ENCODE measurements at regions of chrX and their contacts with region 1.

Region 1: DNA sequence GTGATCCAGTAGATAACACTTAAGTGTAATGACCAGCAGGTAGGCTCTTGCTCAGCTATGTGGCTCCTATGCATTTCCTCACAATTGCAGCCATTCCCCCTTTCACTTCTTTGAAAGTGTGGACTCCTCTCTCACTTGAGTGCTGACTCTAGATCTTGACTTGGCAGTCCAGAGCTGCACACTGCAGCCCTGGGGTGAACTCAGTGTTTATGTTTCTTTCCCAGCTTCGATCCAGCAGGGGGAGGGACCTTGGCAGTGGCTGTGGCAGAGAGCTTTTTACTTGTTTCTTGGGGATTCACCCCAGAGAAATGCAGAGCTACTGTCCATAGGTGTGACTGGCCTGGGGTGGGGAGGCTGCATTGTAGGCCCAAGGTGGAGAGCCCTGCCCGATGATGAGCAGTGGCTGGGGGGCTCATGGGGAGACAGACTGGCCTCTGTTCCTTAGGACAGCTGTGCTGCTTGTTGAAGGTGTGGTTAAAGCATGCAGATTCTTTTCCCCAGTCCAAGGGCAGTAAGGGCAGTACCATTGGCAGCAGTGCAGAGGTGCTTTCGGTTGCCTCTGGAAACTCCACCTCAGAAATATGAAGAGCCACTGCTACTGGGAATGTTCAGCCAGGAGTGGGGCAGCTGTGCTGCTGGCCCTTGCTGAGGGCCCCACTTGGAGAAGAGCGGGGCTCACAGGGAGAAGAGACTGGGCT is 134.7 kb downstream of the SH3BGRL start:
- DNase-seq: peak; percentile 55
- H3K4me3 ChIP-seq: no peak overlapping the region
- H3K27ac ChIP-seq: peak overlapping the region; percentile 29 to 66 (median 56)
- H3K4me1 ChIP-seq: peaks cover 0 to 17% (median 7%) of the 10 kb centered on the region in 4 donors
- H3K27me3 ChIP-seq: no peaks in the 10 kb centered on the region
- CTCF ChIP-seq: no peak
- EP300 ChIP-seq: no peak
- POLR2A ChIP-seq: no peak

Region 2: DNA sequence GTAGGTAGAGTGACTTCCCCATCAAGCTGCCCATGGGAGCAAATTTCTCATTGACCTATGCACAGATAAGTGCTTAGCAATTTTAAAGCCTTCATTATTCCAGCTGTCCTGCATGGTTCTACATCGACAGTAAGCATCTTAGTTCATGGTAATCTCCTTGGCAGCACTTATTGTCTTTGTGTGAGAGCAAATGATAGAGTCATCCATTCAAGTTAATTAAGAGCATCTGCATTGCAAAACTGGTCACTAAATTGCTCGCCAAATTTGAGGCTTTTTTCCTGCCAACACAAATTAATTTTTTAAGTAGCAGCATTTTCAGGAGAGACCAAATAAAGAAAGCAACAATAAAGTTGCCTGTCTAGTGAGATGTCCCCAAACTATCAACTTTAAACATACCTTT is 58.0 kb before region 1 on chrX:
- intact Hi-C with region 1: loop called (anchors 10 kb)
- DNase-seq: no peak
- H3K4me3 ChIP-seq: no peak overlapping the region
- H3K27ac ChIP-seq: no peak overlapping the region
- H3K4me1 ChIP-seq: no peaks in the 10 kb centered on the region
- H3K27me3 ChIP-seq: no peaks in the 10 kb centered on the region
- CTCF ChIP-seq: no peak
- EP300 ChIP-seq: no peak
- POLR2A ChIP-seq: no peak

Region 3: GRCh38 chrX:81355436-81355835 is 18.8 kb after region 1 on chrX:
- intact Hi-C with region 1: no loop called
- DNase-seq: no peak
- H3K4me3 ChIP-seq: no peak overlapping the region
- H3K27ac ChIP-seq: no peak overlapping the region
- H3K4me1 ChIP-seq: no peaks in the 10 kb centered on the region
- H3K27me3 ChIP-seq: no peaks in the 10 kb centered on the region
- CTCF ChIP-seq: no peak
- EP300 ChIP-seq: no peak
- POLR2A ChIP-seq: no peak